ENCODE measurements at regions of chr1 and their contacts with region 1.

Region 1: GRCh38 chr1:109112652-109113285 is 1.1 kb upstream of the ELAPOR1 start:
- DNase-seq: peak; percentile 97
- H3K4me3 Mint-ChIP-seq: peak overlapping the region; percentile 84
- H3K27ac Mint-ChIP-seq: peak overlapping the region; percentile 89
- H3K4me1 Mint-ChIP-seq: peaks cover 39% of the 10 kb centered on the region
- H3K27me3 Mint-ChIP-seq: peaks cover 19% of the 10 kb centered on the region

Region 2: DNA sequence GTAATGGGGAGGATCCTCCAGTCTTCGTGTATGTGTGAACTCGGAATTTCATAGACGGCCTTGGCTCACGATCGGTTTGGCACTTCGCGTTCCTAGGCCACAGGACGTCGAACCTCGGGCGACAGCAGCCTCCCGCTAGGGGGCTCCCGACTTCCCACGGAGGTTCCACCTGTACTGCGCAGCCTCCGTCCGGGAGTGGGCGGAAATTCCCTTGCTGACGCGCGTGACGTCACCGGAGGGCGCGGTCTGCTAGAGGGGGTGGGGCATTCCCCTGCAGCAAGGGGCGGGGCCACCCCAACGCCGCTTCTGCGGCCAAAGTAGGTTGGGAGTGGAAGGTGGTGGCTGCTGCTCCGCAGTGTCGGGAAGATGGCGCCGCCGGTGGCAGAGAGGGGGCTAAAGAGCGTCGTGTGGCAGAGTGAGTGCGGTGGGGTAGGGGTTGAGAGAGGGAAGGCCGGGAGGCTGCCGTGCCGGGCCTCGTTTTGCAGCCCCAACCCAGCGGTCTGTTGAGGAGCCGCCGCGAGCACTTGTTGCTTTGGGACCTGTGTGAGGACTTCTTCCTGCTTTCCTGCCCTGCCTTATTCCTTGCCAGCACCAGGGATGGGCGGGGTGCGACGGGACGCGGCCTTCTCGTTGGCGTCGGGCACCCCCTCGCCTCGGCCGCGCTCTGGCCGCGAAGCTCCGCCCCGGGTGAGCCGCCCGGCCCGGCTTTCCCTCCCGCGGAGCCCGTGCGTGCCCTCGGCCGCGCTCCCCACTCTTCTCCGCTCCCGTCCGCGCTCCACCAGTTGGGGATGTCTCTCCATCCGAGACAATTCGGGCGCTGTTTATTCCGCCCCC is 366.2 kb before region 1 on chr1 and contains the start of gene STXBP3:
- intact Hi-C with region 1: loop called (anchors 5 kb)
- DNase-seq: peak; percentile 100
- H3K4me3 Mint-ChIP-seq: peak within 1 kb of the TSS; percentile 97
- H3K27ac Mint-ChIP-seq: peak within 1 kb of the TSS; percentile 97
- H3K4me1 Mint-ChIP-seq: peaks cover 27% of the 10 kb centered on the region
- H3K27me3 Mint-ChIP-seq: peaks cover 1% of the 10 kb centered on the region
- total RNA-seq, gene STXBP3: 41.1 and 48.9 TPM in 2 replicates

Region 3: GRCh38 chr1:109011335-109011734 is 101.4 kb before region 1 on chr1:
- intact Hi-C with region 1: no loop called
- DNase-seq: no peak
- H3K4me3 Mint-ChIP-seq: no peak overlapping the region
- H3K27ac Mint-ChIP-seq: no peak overlapping the region
- H3K4me1 Mint-ChIP-seq: no peaks in the 10 kb centered on the region
- H3K27me3 Mint-ChIP-seq: no peaks in the 10 kb centered on the region

Region 4: DNA sequence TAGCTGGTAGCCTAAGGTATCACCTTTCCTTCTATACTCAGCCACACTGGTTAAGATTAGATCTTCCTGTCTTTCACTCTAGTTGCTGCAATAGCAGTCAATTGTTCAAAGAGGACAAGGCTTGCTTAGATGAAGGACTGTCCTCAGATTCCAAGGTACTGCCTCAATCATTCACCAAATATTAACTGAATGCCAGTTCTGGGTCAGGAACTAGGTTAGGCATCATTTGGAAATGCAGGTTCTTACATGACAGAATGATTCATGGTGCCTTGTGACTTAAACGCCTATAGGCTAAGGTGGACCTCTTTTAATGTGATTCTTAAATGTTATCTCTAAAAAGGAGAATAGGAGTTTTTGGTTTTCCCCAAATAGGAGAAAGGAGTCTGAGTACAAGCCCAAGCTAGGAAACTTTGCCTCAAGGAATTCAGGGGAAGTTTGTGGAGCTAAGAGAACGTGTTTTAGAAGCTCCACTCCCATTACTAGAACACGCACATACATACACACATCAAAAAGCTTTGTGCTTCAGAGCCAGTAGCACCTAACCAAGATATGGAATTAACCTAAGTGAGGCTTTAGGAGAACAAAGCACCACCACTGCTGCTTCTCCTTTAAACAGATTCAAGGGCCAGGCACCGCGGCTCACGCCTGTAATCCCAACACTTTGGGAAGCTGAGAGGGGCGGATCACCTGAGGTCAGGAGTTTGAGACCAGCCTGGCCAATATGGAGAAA is 62.3 kb before region 1 on chr1:
- intact Hi-C with region 1: no loop called
- DNase-seq: no peak
- H3K4me3 Mint-ChIP-seq: no peak overlapping the region
- H3K27ac Mint-ChIP-seq: no peak overlapping the region
- H3K4me1 Mint-ChIP-seq: no peaks in the 10 kb centered on the region
- H3K27me3 Mint-ChIP-seq: peaks cover 13% of the 10 kb centered on the region

Region 5: GRCh38 chr1:109075531-109076490 is 37.0 kb before region 1 on chr1 and contains the start of gene TAF13:
- intact Hi-C with region 1: loop called (anchors 1 kb)
- DNase-seq: peak; percentile 97
- H3K4me3 Mint-ChIP-seq: peak within 1 kb of the TSS; percentile 93
- H3K27ac Mint-ChIP-seq: peak within 1 kb of the TSS; percentile 92
- H3K4me1 Mint-ChIP-seq: peaks cover 10% of the 10 kb centered on the region
- H3K27me3 Mint-ChIP-seq: no peaks in the 10 kb centered on the region
- total RNA-seq, gene TAF13: 24.9 and 31.7 TPM in 2 replicates

Region 6: GRCh38 chr1:109099938-109100773 is 12.6 kb before region 1 on chr1:
- intact Hi-C with region 1: loop called (anchors 1 kb)
- DNase-seq: peak; percentile 99
- H3K4me3 Mint-ChIP-seq: peak overlapping the region; percentile 96
- H3K27ac Mint-ChIP-seq: peak overlapping the region; percentile 96
- H3K4me1 Mint-ChIP-seq: peaks cover 11% of the 10 kb centered on the region
- H3K27me3 Mint-ChIP-seq: peaks cover 2% of the 10 kb centered on the region

Region 7: DNA sequence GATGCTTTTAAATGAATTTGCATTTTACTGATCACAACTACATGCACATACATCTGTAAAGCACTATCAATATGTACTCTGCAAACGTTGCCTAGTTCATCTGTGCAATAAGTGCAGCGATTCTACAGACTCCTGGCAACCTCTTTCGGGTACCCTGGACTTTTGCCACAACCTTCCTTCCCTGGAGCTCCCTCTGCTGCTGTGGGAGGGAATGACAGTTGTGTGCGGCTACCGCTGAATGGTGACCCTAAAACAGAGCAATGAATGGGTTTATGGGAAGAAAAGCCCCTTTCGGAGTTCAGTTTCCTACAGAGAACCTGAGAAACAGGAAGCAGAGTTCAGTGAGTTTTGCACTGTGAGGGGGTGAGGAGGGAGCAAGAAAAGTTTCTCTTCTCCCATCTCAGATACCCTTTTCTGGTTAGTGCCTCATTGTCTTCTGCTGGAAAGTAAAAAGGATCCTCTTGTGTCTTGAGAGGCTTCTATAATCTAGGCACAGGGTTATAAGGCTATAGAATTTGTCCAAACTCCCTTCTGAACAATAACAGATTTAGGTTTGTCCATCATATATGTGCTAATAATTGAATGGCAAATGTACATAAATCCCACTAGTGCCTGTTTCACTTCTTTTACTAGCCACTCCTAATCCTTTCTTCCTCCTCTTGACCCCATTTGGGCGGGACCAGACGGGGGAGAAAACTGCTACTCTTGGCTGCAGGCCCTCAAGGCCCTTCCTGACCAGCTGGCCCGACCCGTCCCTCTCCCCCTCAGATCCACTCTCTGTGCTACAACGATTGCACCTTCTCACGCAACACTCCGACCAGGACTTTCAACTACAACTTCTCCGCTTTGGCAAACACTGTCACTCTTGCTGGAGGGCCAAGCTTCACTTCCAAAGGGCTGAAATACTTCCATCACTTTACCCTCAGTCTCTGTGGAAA is 81.2 kb after region 1 on chr1:
- intact Hi-C with region 1: loop called (anchors 1 kb)
- DNase-seq: peak; percentile 91
- H3K4me3 Mint-ChIP-seq: no peak overlapping the region
- H3K27ac Mint-ChIP-seq: no peak overlapping the region
- H3K4me1 Mint-ChIP-seq: peaks cover 11% of the 10 kb centered on the region
- H3K27me3 Mint-ChIP-seq: no peaks in the 10 kb centered on the region

Region 8: DNA sequence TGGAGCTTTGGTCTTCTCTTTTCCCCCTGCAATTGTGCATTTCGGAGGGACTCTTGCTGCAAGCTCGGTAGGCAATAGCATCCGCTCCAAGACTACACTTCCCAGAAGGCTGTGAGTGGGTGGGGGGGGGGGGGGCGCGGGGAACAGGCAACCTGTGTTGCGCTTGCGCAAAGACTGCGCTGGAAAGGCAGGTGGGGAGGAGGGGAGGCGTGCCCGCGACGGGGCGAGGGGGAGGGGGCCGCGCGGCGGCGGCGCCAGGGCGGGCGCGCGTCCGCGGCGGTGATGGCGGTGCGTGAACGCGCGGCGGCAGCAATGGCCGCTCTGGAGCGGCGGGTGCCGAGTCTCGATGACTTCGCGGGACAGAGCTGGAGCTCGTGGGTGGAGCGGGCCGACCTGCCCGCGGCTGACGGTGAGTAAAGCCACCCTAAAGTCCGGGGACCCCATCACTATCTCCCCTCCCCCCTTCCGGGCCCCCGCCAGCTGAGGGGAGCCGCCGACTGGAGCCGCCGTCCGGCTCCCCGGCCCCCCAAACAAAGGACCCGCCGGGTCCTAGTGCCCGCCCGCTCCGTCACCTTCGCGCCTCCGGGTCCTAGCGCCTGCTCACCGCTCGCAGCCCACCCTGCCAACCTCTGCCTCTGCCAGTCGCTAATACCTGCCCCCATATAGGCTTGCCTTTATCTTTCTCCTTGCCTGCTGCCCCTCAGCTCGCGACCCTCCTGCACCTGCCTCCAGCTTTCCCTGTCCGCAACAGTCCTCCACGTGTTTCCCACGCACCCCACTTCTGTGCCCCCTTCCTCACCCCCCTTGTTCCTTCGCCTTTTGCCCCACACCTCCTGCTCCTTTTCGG is 371.1 kb after region 1 on chr1 and contains the start of gene ATXN7L2:
- intact Hi-C with region 1: loop called (anchors 10 kb)
- DNase-seq: peak; percentile 96
- H3K4me3 Mint-ChIP-seq: peak within 1 kb of the TSS; percentile 99
- H3K27ac Mint-ChIP-seq: peak within 1 kb of the TSS; percentile 98
- H3K4me1 Mint-ChIP-seq: peaks cover 41% of the 10 kb centered on the region
- H3K27me3 Mint-ChIP-seq: peaks cover 19% of the 10 kb centered on the region
- total RNA-seq, gene ATXN7L2: 15.1 and 15.6 TPM in 2 replicates